ENCODE measurements at regions of chr1 and their contacts with region 1.

Region 1: DNA sequence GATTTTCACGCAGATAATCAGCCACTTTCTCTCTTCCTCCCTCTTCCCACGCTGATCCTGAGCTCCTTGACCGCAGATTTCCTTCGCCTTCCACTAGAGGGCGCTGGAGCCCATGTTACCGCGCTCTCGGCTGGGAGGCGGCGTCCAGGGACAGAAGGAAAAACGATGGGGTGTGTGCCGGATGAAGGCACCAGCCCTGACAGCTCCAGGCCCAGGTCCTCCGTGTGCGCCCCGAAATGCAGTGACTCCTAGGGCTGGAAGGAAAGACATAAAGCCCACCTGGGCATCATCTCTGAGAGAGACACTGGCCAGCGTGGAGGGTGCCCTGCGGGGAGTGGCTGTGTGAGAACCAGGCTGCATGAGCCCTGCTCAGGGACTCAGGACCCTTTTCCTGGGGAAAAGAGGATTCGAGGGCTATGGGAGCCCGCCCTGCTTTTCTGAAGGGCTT is 44.9 kb upstream of the CYP2J2 start:
- DNase-seq: peak in 7 of 9 donors; percentile 22 to 63 (median 36)
- ATAC-seq: peak; percentile 64
- H3K4me3 ChIP-seq: no peak overlapping the region
- H3K4me3 Mint-ChIP-seq: peak overlapping the region in 2 of 10 donors; percentile 20 to 71
- H3K27ac ChIP-seq: no peak overlapping the region
- H3K27ac Mint-ChIP-seq: no peak overlapping the region
- H3K4me1 ChIP-seq: peaks cover 0 to 6% of the 10 kb centered on the region in 2 donors
- H3K4me1 Mint-ChIP-seq: peaks cover 0 to 7% (median 5%) of the 10 kb centered on the region in 7 donors
- H3K27me3 ChIP-seq: peaks cover 0 to 5% of the 10 kb centered on the region in 2 donors
- H3K27me3 Mint-ChIP-seq: peaks cover 16 to 44% (median 31%) of the 10 kb centered on the region in 5 donors

Region 2: GRCh38 chr1:58047265-58047858 is 1924.1 kb before region 1 on chr1:
- CTCF ChIA-PET with region 1: no interaction called
- POLR2A ChIA-PET with region 1: no interaction called
- intact Hi-C with region 1: loop called in 1 of 2 experiments (anchors 10 kb)
- DNase-seq: peak in 3 of 9 donors; percentile 4 to 7 (median 6)
- ATAC-seq: no peak
- H3K4me3 ChIP-seq: no peak overlapping the region
- H3K4me3 Mint-ChIP-seq: no peak overlapping the region
- H3K27ac ChIP-seq: no peak overlapping the region
- H3K27ac Mint-ChIP-seq: no peak overlapping the region
- H3K4me1 ChIP-seq: no peaks in the 10 kb centered on the region
- H3K4me1 Mint-ChIP-seq: no peaks in the 10 kb centered on the region
- H3K27me3 ChIP-seq: no peaks in the 10 kb centered on the region
- H3K27me3 Mint-ChIP-seq: no peaks in the 10 kb centered on the region

Region 3: DNA sequence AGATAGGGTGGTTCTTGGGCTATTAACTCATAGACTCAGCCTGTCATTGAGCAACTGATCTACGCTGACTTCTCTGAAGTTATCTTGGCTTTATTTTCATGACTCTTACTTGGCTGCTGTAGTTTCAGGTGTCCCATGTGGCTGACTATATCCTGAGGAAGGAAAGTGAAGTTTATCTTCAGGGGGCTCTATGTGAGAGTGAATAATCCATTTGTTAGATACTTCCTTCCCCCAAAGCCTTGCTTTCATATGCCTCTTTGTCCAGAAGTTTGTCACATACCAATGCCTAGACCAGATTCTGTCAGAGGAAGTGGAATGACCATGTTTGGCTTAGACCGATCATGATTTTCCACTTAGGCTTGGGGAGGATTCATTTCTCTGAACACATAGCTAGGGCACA is 130.0 kb after region 1 on chr1:
- CTCF ChIA-PET with region 1: no interaction called
- POLR2A ChIA-PET with region 1: no interaction called
- intact Hi-C with region 1: no loop called
- DNase-seq: no peak
- ATAC-seq: no peak
- H3K4me3 ChIP-seq: no peak overlapping the region
- H3K4me3 Mint-ChIP-seq: no peak overlapping the region
- H3K27ac ChIP-seq: no peak overlapping the region
- H3K27ac Mint-ChIP-seq: no peak overlapping the region
- H3K4me1 ChIP-seq: no peaks in the 10 kb centered on the region
- H3K4me1 Mint-ChIP-seq: no peaks in the 10 kb centered on the region
- H3K27me3 ChIP-seq: no peaks in the 10 kb centered on the region
- H3K27me3 Mint-ChIP-seq: peaks cover 0 to 13% (median 8%) of the 10 kb centered on the region in 5 donors

Region 4: GRCh38 chr1:60765204-60765603 is 793.7 kb after region 1 on chr1:
- CTCF ChIA-PET with region 1: no interaction called
- POLR2A ChIA-PET with region 1: no interaction called
- intact Hi-C with region 1: loop called in 1 of 2 experiments (anchors 10 kb)
- DNase-seq: no peak
- ATAC-seq: no peak
- H3K4me3 ChIP-seq: no peak overlapping the region
- H3K4me3 Mint-ChIP-seq: no peak overlapping the region
- H3K27ac ChIP-seq: no peak overlapping the region
- H3K27ac Mint-ChIP-seq: no peak overlapping the region
- H3K4me1 ChIP-seq: no peaks in the 10 kb centered on the region
- H3K4me1 Mint-ChIP-seq: no peaks in the 10 kb centered on the region
- H3K27me3 ChIP-seq: no peaks in the 10 kb centered on the region
- H3K27me3 Mint-ChIP-seq: peaks cover 0 to 20% (median 6%) of the 10 kb centered on the region in 5 donors

Region 5: DNA sequence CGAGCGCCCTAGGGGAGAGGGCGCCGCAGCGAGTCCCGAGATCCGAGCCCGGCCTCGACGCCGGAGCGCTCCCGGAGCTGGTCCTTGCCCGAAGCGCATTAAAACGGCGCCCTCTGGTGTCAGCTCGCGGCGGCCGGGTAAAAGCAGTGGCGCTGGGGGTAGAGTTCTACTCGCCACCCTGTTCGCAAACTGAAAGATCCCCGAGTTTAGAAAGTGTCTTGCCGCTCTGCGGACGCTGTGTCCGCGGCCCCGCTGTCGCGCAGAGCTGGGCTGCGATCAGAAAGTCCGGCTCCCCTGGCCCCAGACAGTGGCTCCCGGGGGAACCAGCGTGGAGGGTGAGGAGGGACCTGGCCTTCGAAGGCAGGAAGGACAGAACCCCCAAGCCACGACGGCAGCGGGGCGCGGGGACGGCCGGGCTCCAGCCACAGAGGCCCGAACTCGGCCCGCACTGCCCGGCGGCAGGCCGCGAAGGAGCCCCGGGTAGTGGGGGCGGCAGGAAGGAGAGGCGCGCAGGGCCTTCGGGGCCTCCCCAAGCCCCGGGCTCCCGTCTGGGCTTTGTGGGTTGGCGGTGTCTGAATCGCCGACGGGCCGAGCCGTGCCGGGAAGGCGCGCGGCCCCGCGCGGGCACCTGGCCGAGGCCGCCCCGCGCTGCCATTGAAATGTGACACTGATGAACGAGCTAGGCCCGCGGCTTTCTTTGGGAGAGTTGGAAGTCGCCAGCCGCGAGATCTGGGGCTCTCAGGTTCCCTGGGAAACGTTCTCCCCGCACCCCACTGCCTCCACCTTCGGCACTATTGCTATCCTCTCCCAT is 1071.7 kb after region 1 on chr1:
- CTCF ChIA-PET with region 1: no interaction called
- POLR2A ChIA-PET with region 1: no interaction called
- intact Hi-C with region 1: loop called (anchors 1 to 2 kb)
- DNase-seq: peak; percentile 62 to 83 (median 78)
- ATAC-seq: peak; percentile 96
- H3K4me3 ChIP-seq: peak overlapping the region; percentile 35
- H3K4me3 Mint-ChIP-seq: peak overlapping the region; percentile 53 to 88 (median 73)
- H3K27ac ChIP-seq: no peak overlapping the region
- H3K27ac Mint-ChIP-seq: no peak overlapping the region
- H3K4me1 ChIP-seq: peaks cover 3 to 4% of the 10 kb centered on the region in 2 donors
- H3K4me1 Mint-ChIP-seq: peaks cover 0 to 4% (median 0%) of the 10 kb centered on the region in 7 donors
- H3K27me3 ChIP-seq: peaks cover 0 to 8% of the 10 kb centered on the region in 2 donors
- H3K27me3 Mint-ChIP-seq: peaks cover 28 to 67% (median 38%) of the 10 kb centered on the region in 5 donors

Region 6: GRCh38 chr1:61202854-61203598 is 1231.5 kb after region 1 on chr1:
- CTCF ChIA-PET with region 1: no interaction called
- POLR2A ChIA-PET with region 1: no interaction called
- intact Hi-C with region 1: no loop called
- DNase-seq: no peak
- ATAC-seq: no peak
- H3K4me3 ChIP-seq: no peak overlapping the region
- H3K4me3 Mint-ChIP-seq: no peak overlapping the region
- H3K27ac ChIP-seq: no peak overlapping the region
- H3K27ac Mint-ChIP-seq: no peak overlapping the region
- H3K4me1 ChIP-seq: no peaks in the 10 kb centered on the region
- H3K4me1 Mint-ChIP-seq: no peaks in the 10 kb centered on the region
- H3K27me3 ChIP-seq: no peaks in the 10 kb centered on the region
- H3K27me3 Mint-ChIP-seq: peaks cover 0 to 16% (median 3%) of the 10 kb centered on the region in 5 donors

Region 7: GRCh38 chr1:61588736-61589672 is 1617.5 kb after region 1 on chr1:
- CTCF ChIA-PET with region 1: interaction called, 3 read pairs
- POLR2A ChIA-PET with region 1: no interaction called
- intact Hi-C with region 1: loop called in 1 of 2 experiments (anchors 1 kb)
- DNase-seq: peak in 8 of 9 donors; percentile 7 to 53 (median 46)
- ATAC-seq: peak; percentile 74
- H3K4me3 ChIP-seq: no peak overlapping the region
- H3K4me3 Mint-ChIP-seq: no peak overlapping the region
- H3K27ac ChIP-seq: no peak overlapping the region
- H3K27ac Mint-ChIP-seq: no peak overlapping the region
- H3K4me1 ChIP-seq: no peaks in the 10 kb centered on the region
- H3K4me1 Mint-ChIP-seq: peaks cover 0 to 3% (median 0%) of the 10 kb centered on the region in 7 donors
- H3K27me3 ChIP-seq: no peaks in the 10 kb centered on the region
- H3K27me3 Mint-ChIP-seq: peaks cover 0 to 10% (median 8%) of the 10 kb centered on the region in 5 donors

Measured in naive thymus-derived CD4-positive, alpha-beta T cell (primary cell).